ENCODE measurements at regions of chr6 and their contacts with region 1.

Region 1: DNA sequence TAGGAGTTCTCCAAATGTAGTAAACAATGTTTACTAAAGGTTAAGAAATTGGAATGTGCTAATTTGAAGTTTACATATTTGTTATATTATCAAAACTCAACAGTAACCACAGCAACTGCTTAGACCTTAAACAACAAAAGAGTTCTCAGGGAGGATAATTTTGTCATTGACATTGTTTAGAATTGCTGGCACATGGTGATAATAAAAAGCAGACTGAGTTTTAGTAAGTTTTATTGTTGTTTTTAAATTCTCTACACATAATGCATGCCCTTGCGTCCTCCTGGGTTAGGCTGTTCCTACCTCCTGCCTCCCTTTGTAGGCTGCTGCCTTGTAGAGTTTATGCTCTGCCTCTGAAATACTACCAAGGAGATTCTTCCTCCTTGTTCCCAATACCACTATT is 28.7 kb downstream of the LAMA4 start:
- DNase-seq: no peak
- H3K4me3 ChIP-seq: no peak overlapping the region
- H3K4me3 Mint-ChIP-seq: no peak overlapping the region
- H3K27ac Mint-ChIP-seq: no peak overlapping the region
- H3K4me1 ChIP-seq: no peaks in the 10 kb centered on the region
- H3K4me1 Mint-ChIP-seq: no peaks in the 10 kb centered on the region
- H3K27me3 ChIP-seq: no peaks in the 10 kb centered on the region
- H3K27me3 Mint-ChIP-seq: peaks cover 8% of the 10 kb centered on the region
- CTCF ChIP-seq: no peak

Region 2: DNA sequence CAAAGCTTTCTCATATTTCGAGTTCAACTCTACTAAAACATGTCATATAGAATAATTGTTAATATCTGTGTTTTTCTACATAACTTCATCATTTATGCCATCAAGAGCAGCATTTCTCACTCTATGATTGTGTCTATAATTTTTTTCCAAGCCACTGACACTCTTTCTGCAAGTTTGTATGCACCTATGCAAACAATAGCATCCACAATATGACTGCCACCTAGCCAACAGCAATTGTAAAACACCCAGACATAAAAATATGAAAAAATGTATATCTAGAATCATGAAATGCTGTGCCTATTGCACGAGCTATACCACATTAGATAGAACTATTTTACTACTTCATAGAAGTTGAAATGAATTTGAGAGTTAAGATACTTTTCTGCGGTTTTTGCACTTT is 1345.0 kb after region 1 on chr6:
- CTCF ChIA-PET with region 1: no interaction called
- POLR2A ChIA-PET with region 1: no interaction called
- intact Hi-C with region 1: loop called (anchors 5 kb)
- DNase-seq: no peak
- H3K4me3 ChIP-seq: no peak overlapping the region
- H3K4me3 Mint-ChIP-seq: no peak overlapping the region
- H3K27ac Mint-ChIP-seq: no peak overlapping the region
- H3K4me1 ChIP-seq: no peaks in the 10 kb centered on the region
- H3K4me1 Mint-ChIP-seq: no peaks in the 10 kb centered on the region
- H3K27me3 ChIP-seq: no peaks in the 10 kb centered on the region
- H3K27me3 Mint-ChIP-seq: no peaks in the 10 kb centered on the region
- CTCF ChIP-seq: no peak

Measured in Caco-2 (cell line).